Transverse colon (tissue), 4 donors: ENCODE measurements at regions of chrX and their contacts with region 1.

Region 1: DNA sequence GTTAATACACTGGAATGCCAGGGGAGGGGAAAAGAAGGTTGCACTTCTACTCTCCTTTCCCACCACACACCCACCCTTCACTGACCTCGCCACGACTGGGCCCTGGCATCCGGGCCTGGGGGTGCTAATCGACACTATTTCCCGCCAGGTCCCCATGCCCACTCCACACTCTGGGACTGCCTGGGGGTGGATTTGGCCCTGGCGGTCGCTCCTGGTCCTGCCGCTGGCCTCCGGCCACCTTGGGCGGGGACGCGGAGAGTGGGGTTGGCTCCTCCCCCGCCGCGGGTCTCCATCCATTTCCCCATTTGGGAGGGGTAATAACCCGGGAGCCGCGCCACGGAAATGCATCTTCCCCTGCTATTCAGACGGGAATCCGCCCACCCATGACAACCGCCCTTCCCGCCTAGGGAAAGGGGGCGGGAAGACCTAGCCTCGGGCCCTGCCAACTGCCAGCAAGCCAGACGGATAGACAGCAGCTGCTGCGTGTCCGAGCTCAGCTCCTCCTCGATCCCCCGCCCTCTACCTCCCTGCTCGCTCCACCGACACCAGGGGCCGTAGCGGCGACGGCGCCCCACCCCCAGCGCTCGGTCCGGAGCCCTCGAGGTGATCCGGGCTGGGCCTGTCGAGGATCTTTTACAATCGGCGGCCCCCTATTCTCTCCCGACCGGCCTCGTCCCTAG is 78.1 kb downstream of the RLIM start:
- DNase-seq: peak; percentile 78
- H3K4me3 ChIP-seq: peak overlapping the region; percentile 28 to 51 (median 38)
- H3K27ac ChIP-seq: peak overlapping the region; percentile 81 to 92 (median 88)
- H3K4me1 ChIP-seq: peaks cover 0 to 9% (median 0%) of the 10 kb centered on the region in 4 donors
- H3K27me3 ChIP-seq: no peaks in the 10 kb centered on the region
- CTCF ChIP-seq: peak; percentile 34 to 73 (median 45)
- EP300 ChIP-seq: no peak
- POLR2A ChIP-seq: peak; percentile 16

Region 2: DNA sequence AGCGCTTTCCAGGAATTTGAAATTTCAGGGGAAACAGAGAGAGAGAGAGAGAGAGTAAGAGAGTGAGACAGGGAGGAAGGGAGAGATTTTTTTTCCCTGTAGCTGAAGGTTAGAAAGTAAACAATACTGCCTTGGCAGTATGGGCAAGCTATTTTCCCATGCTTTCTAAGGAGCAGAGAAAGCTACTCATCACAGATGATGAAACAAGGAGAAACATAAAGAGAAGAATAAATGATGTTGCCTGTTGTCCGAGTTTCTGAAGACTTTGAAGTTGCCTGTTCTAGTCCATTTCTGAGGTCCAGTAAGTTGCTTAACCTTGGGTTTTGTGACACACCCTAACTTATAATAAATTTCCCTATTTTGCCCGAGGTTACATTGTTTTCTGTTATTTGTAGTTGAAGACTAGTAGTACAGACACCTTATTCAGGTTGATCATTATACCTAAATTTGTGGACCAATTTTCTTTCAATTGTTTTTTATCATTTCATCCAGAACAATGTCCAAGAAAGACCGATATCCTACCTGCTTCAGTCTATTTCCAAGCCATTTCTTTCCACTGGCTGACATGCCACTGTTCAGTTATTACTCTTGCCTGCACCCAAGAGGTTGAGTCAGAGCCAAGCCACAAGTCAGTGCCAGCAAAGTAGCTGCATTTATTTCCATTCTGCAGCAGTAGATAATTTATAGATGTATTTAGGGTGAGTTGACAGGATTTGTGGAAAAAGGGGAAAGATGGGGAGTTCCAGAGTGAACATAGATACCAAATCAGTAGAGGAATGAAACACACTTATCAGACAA is 164.7 kb before region 1 on chrX:
- in situ Hi-C with region 1: loop called in 2 of 4 experiments (anchors 10 to 25 kb)
- intact Hi-C with region 1: no loop called
- DNase-seq: no peak
- H3K4me3 ChIP-seq: no peak overlapping the region
- H3K27ac ChIP-seq: no peak overlapping the region
- H3K4me1 ChIP-seq: no peaks in the 10 kb centered on the region
- H3K27me3 ChIP-seq: no peaks in the 10 kb centered on the region
- CTCF ChIP-seq: no peak
- EP300 ChIP-seq: no peak
- POLR2A ChIP-seq: no peak

Region 3: GRCh38 chrX:74382613-74383012 is 153.7 kb before region 1 on chrX:
- in situ Hi-C with region 1: loop called in 2 of 4 experiments (anchors 10 to 25 kb)
- intact Hi-C with region 1: loop called (anchors 10 kb)
- DNase-seq: peak; percentile 70
- H3K4me3 ChIP-seq: no peak overlapping the region
- H3K27ac ChIP-seq: no peak overlapping the region
- H3K4me1 ChIP-seq: no peaks in the 10 kb centered on the region
- H3K27me3 ChIP-seq: no peaks in the 10 kb centered on the region
- CTCF ChIP-seq: peak; percentile 54 to 83 (median 63)
- EP300 ChIP-seq: no peak
- POLR2A ChIP-seq: no peak